Gastrocnemius medialis (tissue), 4 donors: ENCODE measurements at regions of chrX and their contacts with region 1.

Region 1: GRCh38 chrX:23907498-23908218 is at the starts of genes APOO and CXorf58:
- DNase-seq: peak; percentile 76 to 89
- ATAC-seq: peak; percentile 92 to 97
- H3K4me3 ChIP-seq: peak within 1 kb of the TSS; percentile 49 to 76 (median 68)
- H3K27ac ChIP-seq: peak within 1 kb of the TSS; percentile 87 to 95 (median 92)
- H3K4me1 ChIP-seq: peaks cover 3 to 8% of the 10 kb centered on the region in 2 donors
- H3K27me3 ChIP-seq: no peaks in the 10 kb centered on the region
- CTCF ChIP-seq: peak; percentile 74 to 84 (median 77)
- POLR2A ChIP-seq: peak; percentile 21 to 28
- total RNA-seq, gene APOO: 12.1 to 37.3 (median 30.8) TPM
- total RNA-seq, gene CXorf58: 3.1 TPM in 1 of 4 donors, not detected in the others

Region 2: GRCh38 chrX:23667239-23668177 is 240.2 kb before region 1 on chrX and contains the start of gene PRDX4:
- in situ Hi-C with region 1: no loop called
- intact Hi-C with region 1: loop called (anchors 10 kb)
- DNase-seq: peak; percentile 80 to 88
- ATAC-seq: peak; percentile 93 to 97
- H3K4me3 ChIP-seq: peak within 1 kb of the TSS; percentile 62 to 72 (median 72)
- H3K27ac ChIP-seq: peak within 1 kb of the TSS; percentile 81 to 87 (median 86)
- H3K4me1 ChIP-seq: peaks cover 4 to 9% of the 10 kb centered on the region in 2 donors
- H3K27me3 ChIP-seq: no peaks in the 10 kb centered on the region
- CTCF ChIP-seq: no peak
- POLR2A ChIP-seq: peak; percentile 43 to 49
- total RNA-seq, gene PRDX4: 21.2 to 40.7 (median 37.6) TPM

Region 3: DNA sequence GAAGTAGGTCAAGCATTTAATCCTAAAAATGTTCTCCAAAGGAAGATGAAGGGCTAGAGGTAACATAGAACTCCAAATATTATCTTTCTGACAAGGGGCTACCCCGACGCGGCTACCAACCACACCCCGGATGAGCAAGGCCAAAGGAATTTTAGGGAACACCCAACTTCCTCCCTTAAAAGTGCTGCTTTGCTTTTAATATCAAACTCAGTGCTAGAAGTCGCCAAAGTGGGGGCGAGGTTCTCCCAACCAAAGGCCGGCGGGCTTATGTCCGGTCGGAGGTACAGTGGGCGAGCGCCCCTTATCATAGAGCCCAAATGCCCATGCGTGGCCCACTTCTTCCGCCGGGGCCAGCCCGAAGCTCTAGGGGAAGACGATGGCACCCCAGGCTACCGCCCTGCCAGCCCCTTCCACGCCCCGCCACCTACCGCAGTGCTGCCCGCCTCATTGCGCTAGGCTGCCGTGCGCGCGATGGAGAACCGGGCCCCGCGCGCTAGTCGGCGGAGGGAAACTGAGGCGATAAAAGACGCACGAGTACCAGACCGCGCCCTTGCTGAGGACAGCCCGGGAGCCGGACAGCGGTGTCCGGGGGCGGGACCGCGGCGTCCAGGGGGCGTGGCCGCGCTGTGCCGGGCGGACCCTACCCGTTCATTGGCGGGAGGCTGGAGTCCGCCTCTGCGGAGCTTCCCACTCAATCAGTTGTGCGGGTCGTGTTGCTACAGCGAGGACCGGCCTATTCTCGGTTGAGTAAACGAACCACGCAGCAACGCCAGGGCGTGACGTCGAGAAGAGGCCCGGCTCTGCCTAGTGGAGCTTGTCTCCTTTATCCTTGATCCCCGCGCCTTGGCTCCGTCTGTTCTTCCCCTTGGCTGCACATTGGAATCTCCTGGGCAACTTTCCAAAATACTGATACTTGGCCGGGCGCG is 164.7 kb before region 1 on chrX and contains the start of gene ACOT9:
- in situ Hi-C with region 1: no loop called
- intact Hi-C with region 1: loop called (anchors 2 kb)
- DNase-seq: peak; percentile 85 to 96
- ATAC-seq: peak; percentile 91 to 95
- H3K4me3 ChIP-seq: peak within 1 kb of the TSS; percentile 73 to 85 (median 82)
- H3K27ac ChIP-seq: peak within 1 kb of the TSS; percentile 91 to 96 (median 94)
- H3K4me1 ChIP-seq: no peaks in the 10 kb centered on the region
- H3K27me3 ChIP-seq: no peaks in the 10 kb centered on the region
- CTCF ChIP-seq: no peak
- POLR2A ChIP-seq: peak; percentile 78 to 81
- total RNA-seq, gene ACOT9: 12.3 to 21.9 (median 20.6) TPM

Region 4: DNA sequence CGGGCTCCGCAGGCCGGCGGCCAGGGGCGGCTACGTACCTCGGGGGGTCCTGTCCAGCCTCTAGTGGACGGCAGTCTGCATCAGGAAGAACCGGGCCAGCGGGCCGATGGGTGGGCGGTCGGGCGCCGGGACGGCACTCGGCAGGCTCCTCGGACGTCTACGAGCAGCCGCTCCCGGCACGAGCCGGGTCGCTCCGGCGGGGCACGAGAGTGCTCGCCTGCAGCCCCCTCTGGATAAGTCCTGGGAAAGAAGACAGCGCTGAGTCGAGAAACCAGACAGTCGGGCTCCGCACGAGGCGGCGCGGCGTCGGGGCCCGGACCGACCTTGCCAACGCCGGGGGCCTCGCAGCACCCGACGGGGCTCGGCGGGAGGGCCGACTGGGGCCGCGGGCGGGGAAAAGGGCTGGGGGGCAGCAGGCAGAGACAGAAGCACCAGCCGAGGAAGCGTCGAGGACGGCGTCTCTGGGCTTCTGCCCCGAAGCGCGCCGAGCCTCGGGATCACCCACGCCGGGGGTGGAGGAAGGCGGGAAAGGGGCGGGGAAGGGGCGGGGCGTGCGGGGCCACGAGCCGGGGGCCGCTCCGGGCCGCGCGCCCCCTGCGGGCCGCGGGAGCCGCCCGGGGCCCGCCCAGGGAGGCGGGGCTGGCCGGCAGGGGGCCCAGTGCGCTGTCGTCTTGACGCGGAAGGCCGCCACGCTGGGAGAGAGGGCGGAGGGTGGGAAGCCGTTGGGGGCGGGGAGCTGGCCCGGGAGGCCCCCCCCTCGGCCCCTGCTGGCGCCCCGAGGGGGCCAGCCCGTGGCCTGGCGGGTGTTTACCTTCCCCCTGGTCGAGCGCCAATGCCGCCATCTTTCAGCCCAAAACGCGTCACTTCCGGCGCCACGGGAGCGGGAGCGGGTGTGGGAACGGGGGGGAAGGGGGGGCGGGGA is 117.4 kb after region 1 on chrX:
- in situ Hi-C with region 1: loop called in 2 of 4 experiments (anchors 10 to 25 kb)
- intact Hi-C with region 1: loop called (anchors 1 kb)
- DNase-seq: peak; percentile 67 to 82
- ATAC-seq: peak; percentile 81 to 85
- H3K4me3 ChIP-seq: peak overlapping the region; percentile 69 to 92 (median 79)
- H3K27ac ChIP-seq: peak overlapping the region; percentile 90 to 98 (median 94)
- H3K4me1 ChIP-seq: peaks cover 3 to 4% of the 10 kb centered on the region in 2 donors
- H3K27me3 ChIP-seq: peaks cover 0 to 3% (median 0%) of the 10 kb centered on the region in 3 donors
- CTCF ChIP-seq: peak in 1 of 5 experiments; percentile 32
- POLR2A ChIP-seq: peak; percentile 84 to 85

Region 5: GRCh38 chrX:24054182-24055042 is 146.8 kb after region 1 on chrX and contains the start of gene EIF2S3:
- in situ Hi-C with region 1: loop called in 2 of 4 experiments (anchors 10 kb)
- intact Hi-C with region 1: loop called (anchors 2 kb)
- DNase-seq: peak; percentile 69 to 86
- ATAC-seq: peak; percentile 97
- H3K4me3 ChIP-seq: peak within 1 kb of the TSS in 3 of 4 donors; percentile 66 to 83 (median 71)
- H3K27ac ChIP-seq: no peak within 1 kb of the TSS
- H3K4me1 ChIP-seq: peaks cover 0 to 3% of the 10 kb centered on the region in 2 donors
- H3K27me3 ChIP-seq: no peaks in the 10 kb centered on the region
- CTCF ChIP-seq: peak; percentile 33 to 80 (median 71)
- POLR2A ChIP-seq: peak; percentile 29 to 48
- total RNA-seq, gene EIF2S3: 50.8 to 89.1 (median 70.2) TPM

Region 6: DNA sequence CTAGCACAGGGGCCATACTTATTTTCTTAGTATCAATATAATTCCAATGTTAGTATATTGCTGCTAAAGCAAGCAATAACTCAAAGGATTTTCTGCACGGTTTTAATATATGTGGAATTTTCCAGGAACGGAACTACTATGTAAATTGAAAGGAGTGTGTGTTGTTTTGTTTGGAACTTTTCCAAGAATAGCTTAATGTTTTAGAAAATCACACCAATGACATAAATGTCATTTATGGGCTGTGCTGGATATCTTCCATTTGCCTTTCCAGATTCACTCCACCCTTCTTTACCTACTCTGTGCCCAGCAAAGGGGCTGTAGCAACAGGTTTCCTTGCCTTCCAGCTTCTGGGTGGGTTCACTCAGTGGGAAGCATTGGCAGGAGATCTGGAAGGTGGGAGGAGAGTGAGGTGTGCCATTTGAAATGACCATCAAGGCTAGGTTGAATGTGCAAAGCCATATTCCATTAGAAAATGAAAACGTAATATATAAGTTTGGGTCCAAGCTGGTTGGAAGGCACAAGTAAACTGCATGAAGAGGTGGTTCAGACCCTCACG is 216.7 kb after region 1 on chrX:
- in situ Hi-C with region 1: no loop called
- intact Hi-C with region 1: no loop called
- DNase-seq: no peak
- ATAC-seq: no peak
- H3K4me3 ChIP-seq: no peak overlapping the region
- H3K27ac ChIP-seq: no peak overlapping the region
- H3K4me1 ChIP-seq: no peaks in the 10 kb centered on the region
- H3K27me3 ChIP-seq: no peaks in the 10 kb centered on the region
- CTCF ChIP-seq: no peak
- POLR2A ChIP-seq: no peak

Region 7: GRCh38 chrX:24137192-24137591 is 229.5 kb after region 1 on chrX:
- in situ Hi-C with region 1: no loop called
- intact Hi-C with region 1: no loop called
- DNase-seq: no peak
- ATAC-seq: no peak
- H3K4me3 ChIP-seq: no peak overlapping the region
- H3K27ac ChIP-seq: no peak overlapping the region
- H3K4me1 ChIP-seq: no peaks in the 10 kb centered on the region
- H3K27me3 ChIP-seq: no peaks in the 10 kb centered on the region
- CTCF ChIP-seq: no peak
- POLR2A ChIP-seq: no peak

Region 8: GRCh38 chrX:24693453-24694202 is 786.0 kb after region 1 on chrX and contains the start of gene POLA1:
- in situ Hi-C with region 1: no loop called
- intact Hi-C with region 1: loop called (anchors 10 kb)
- DNase-seq: peak; percentile 81 to 93
- ATAC-seq: peak; percentile 97
- H3K4me3 ChIP-seq: peak within 1 kb of the TSS; percentile 64 to 72 (median 70)
- H3K27ac ChIP-seq: peak within 1 kb of the TSS; percentile 77 to 91 (median 88)
- H3K4me1 ChIP-seq: peaks cover 7 to 19% of the 10 kb centered on the region in 2 donors
- H3K27me3 ChIP-seq: no peaks in the 10 kb centered on the region
- CTCF ChIP-seq: peak in 1 of 5 experiments; percentile 4
- POLR2A ChIP-seq: peak in 1 of 2 donors; percentile 15
- total RNA-seq, gene POLA1: 5.2 to 9.6 (median 6.9) TPM